Dorsolateral prefrontal cortex (tissue), 120 donors: ENCODE measurements at regions of chr3 and their contacts with region 1.

Region 1: GRCh38 chr3:170357176-170357919 is at the start of gene SKIL:
- DNase-seq: peak; percentile 87 to 97 (median 96)
- H3K4me3 ChIP-seq: peak within 1 kb of the TSS; percentile 78 to 99 (median 94)
- H3K27ac ChIP-seq: peak within 1 kb of the TSS; percentile 90 to 100 (median 98)
- H3K27me3 ChIP-seq: no peaks in the 10 kb centered on the region
- CTCF ChIP-seq: peak in 16 of 56 donors; percentile 6 to 46 (median 20)
- total RNA-seq, gene SKIL: 30.8 to 77.5 (median 52.6) TPM

Region 2: GRCh38 chr3:169764452-169765274 is 592.7 kb before region 1 on chr3 and contains the start of gene TERC:
- intact Hi-C with region 1: loop called (anchors 10 kb)
- DNase-seq: peak; percentile 81 to 96 (median 91)
- H3K4me3 ChIP-seq: peak within 1 kb of the TSS; percentile 63 to 98 (median 89)
- H3K27ac ChIP-seq: peak within 1 kb of the TSS; percentile 86 to 100 (median 97)
- H3K27me3 ChIP-seq: no peaks in the 10 kb centered on the region
- CTCF ChIP-seq: peak in 14 of 56 donors; percentile 4 to 28 (median 12)
- total RNA-seq, gene TERC: 1.6 to 15.3 (median 4.5) TPM in 78 of 120 experiments, not detected in the others

Region 3: DNA sequence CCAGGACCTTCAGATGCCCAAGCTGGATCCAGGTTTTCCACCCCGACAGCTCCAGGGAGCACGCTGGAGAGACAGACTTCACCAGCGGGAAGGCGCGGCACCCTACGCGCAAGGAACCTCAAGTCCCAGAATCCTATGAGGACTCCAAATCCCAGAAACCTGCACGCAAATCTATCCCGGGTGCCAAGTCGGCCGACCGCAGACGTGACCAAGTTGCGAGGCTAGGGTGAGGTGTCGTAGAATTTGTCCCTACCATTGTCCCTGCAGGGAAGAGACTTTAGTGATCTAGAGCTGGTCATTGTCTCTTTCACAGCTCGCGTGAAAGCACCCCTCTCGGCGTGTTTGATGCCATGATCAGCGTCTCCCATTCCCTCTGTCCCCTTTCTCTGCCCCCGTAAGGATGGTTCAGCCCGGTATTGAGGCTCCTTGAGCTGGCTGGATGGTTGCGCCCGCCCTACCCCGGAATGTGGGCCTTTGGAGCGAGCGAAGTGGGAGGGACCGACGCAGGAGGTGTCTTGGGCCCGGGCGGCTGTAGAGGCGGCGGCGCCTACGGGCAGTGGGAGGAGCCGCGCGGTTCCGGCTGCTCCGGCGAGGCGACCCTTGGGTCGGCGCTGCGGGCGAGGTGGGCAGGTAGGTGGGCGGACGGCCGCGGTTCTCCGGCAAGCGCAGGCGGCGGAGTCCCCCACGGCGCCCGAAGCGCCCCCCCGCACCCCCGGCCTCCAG is 135.3 kb before region 1 on chr3 and contains the start of gene PRKCI:
- intact Hi-C with region 1: loop called (anchors 1 to 5 kb)
- DNase-seq: peak; percentile 87 to 96 (median 94)
- H3K4me3 ChIP-seq: peak within 1 kb of the TSS; percentile 51 to 98 (median 84)
- H3K27ac ChIP-seq: peak within 1 kb of the TSS; percentile 60 to 98 (median 91)
- H3K27me3 ChIP-seq: no peaks in the 10 kb centered on the region
- CTCF ChIP-seq: peak in 13 of 56 donors; percentile 4 to 30 (median 14)
- total RNA-seq, gene PRKCI: 14.6 to 73.6 (median 39.8) TPM

Region 4: DNA sequence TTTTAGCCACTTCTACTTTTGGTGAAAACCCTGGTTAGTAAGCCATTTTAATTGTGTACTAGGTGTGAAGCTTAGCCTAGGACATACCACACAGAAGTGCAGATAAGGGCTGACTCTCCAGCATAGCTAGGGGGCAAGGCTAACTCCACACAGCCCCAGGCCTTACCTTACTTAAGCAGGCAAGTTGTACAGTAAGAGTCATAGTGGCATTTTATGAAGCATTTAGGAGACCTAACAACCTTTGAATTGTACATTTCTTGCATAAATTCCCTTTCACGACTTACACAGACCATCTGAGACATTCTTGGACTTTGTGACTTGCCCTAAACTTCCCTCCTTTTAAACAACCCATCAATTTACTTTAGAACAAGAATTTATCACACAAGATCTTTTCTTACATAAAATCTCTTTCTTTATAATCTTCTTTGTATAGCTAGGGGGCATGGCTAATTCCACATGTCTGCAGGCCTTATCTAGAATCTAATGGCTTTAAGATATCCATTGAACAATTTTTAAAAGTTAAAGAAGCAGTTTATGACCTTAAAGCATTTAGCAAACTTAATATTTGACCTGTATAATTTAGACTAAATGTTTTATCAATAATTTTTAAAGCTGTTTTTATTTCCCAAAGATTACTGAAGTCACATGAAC is 18.5 kb before region 1 on chr3:
- intact Hi-C with region 1: no loop called
- DNase-seq: no peak
- H3K4me3 ChIP-seq: no peak overlapping the region
- H3K27ac ChIP-seq: no peak overlapping the region
- H3K27me3 ChIP-seq: no peaks in the 10 kb centered on the region
- CTCF ChIP-seq: no peak

Region 5: GRCh38 chr3:170405101-170405500 is 47.8 kb after region 1 on chr3:
- intact Hi-C with region 1: loop called in 1 of 2 experiments (anchors 10 kb)
- DNase-seq: no peak
- H3K4me3 ChIP-seq: no peak overlapping the region
- H3K27ac ChIP-seq: no peak overlapping the region
- H3K27me3 ChIP-seq: no peaks in the 10 kb centered on the region
- CTCF ChIP-seq: no peak

Region 6: GRCh38 chr3:170908235-170909116 is 551.1 kb after region 1 on chr3 and contains the start of gene EIF5A2:
- intact Hi-C with region 1: no loop called
- DNase-seq: peak; percentile 34 to 97 (median 92)
- H3K4me3 ChIP-seq: peak within 1 kb of the TSS; percentile 51 to 91 (median 79)
- H3K27ac ChIP-seq: peak within 1 kb of the TSS in 24 of 59 donors; percentile 0 to 76 (median 58)
- H3K27me3 ChIP-seq: no peaks in the 10 kb centered on the region
- CTCF ChIP-seq: peak in 3 of 56 donors; percentile 9 to 33 (median 20)
- total RNA-seq, gene EIF5A2: 9.9 to 61.9 (median 29.6) TPM